Activated CD4-positive, alpha-beta T cell treated with anti-CD3 and anti-CD28 coated beads, Interleukin-2, amount 10 ng/mL, durations not matched to agents 24 days and 14 days (primary cell): ENCODE measurements at regions of chr10 and their contacts with region 1.

Region 1: DNA sequence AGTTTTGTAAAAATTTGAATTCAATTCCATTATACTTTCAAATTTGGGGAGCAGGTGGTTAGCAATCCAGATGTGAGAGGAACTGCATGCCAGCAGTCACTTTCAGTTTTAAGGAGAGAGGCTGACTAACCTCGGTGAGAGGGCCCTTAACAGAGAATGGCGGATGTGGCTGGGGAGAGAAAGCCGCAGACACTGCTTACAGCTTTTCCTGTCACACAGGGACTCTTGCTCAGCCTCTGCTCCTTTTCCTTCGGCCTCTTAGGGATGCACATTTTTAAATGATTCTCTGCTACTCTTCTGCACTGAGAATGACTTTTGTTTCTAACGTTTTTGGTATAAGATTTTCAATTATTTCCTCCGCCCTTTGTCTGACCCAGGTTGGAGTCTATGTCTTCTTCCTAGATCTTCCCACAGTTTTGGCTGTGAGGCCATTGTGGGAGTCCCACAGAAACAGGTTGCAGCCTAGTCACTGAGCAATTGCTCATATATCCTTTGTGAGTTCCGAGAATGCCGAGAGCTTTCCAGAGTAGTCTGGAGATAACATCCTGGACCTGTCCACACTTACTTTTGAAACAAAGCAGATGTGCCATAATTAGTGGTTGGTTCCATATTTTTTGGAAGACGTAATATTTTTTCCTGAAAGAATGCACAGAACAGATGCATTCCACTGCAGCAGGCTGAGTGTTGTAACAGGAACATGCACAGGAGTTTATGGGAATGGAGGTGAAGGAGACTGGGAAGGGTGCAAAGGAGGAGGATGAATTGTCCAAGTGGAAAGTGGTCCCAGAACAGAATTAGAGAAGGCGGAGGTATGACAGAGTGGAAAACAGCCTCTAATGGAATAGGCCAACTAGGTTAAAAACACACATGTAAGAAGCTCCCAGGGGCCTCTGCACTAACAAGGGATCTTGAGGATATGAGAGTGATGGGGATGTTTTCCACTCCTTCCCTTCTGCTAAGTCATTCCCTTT is 168.0 kb upstream of the ZNF32 start:
- DNase-seq: peak; percentile 94
- H3K4me3 Mint-ChIP-seq: peak overlapping the region; percentile 81
- H3K27ac Mint-ChIP-seq: peak overlapping the region; percentile 84
- H3K4me1 Mint-ChIP-seq: peaks cover 46% of the 10 kb centered on the region
- H3K27me3 Mint-ChIP-seq: peaks cover 5% of the 10 kb centered on the region

Region 2: DNA sequence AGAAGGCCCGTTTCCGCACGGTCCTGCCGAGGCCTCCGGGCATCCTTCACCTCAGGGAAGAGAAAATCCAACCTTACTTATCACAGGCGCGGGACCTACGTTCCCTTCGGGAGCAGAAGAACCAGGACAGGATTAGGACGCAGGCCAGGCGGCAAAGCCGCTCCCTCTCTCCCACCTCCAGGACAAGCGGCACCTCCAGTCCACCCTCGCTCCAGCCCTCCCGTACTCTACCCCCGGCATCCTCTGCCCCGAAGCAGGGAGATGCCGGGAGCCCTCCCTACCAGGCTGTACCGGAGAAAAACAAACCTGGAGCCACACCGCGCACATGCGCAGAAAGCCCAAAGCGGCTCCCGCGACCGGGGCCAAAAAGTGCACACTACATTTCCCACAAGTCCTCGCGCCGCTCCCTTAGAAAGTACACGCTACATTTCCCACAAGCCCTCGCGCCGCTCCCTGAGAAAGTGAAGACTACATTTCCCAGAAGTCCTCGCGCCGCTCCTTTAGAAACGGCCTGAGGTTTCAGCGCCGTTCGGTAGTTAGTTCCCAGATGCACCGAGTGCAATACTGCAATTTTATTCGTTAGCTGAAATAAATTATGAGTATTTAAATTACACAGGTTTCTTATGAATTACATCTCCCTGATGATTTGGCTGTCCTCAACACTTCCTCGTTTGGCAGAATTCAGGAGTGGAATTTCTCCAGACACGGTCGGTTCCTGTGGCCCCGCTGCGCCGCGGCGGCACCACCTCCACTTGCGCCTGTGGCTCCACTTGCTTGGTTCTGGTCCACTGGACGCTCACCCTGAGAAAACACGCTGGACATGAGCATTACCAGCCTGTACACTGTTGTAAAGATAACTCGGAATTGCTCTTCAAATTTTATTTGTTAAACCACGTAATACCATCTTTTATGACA is 1263.9 kb before region 1 on chr10:
- intact Hi-C with region 1: loop called (anchors 10 kb)
- DNase-seq: peak; percentile 98
- H3K4me3 Mint-ChIP-seq: peak overlapping the region; percentile 94
- H3K27ac Mint-ChIP-seq: peak overlapping the region; percentile 97
- H3K4me1 Mint-ChIP-seq: peaks cover 27% of the 10 kb centered on the region
- H3K27me3 Mint-ChIP-seq: no peaks in the 10 kb centered on the region

Region 3: GRCh38 chr10:43128958-43129706 is 687.5 kb before region 1 on chr10:
- intact Hi-C with region 1: loop called (anchors 10 kb)
- DNase-seq: peak; percentile 85
- H3K4me3 Mint-ChIP-seq: peak overlapping the region; percentile 66
- H3K27ac Mint-ChIP-seq: peak overlapping the region; percentile 91
- H3K4me1 Mint-ChIP-seq: peaks cover 60% of the 10 kb centered on the region
- H3K27me3 Mint-ChIP-seq: no peaks in the 10 kb centered on the region

Region 4: GRCh38 chr10:43594944-43595589 is 221.6 kb before region 1 on chr10:
- intact Hi-C with region 1: loop called (anchors 5 kb)
- DNase-seq: peak; percentile 84
- H3K4me3 Mint-ChIP-seq: peak overlapping the region; percentile 69
- H3K27ac Mint-ChIP-seq: peak overlapping the region; percentile 85
- H3K4me1 Mint-ChIP-seq: peaks cover 24% of the 10 kb centered on the region
- H3K27me3 Mint-ChIP-seq: peaks cover 10% of the 10 kb centered on the region

Region 5: DNA sequence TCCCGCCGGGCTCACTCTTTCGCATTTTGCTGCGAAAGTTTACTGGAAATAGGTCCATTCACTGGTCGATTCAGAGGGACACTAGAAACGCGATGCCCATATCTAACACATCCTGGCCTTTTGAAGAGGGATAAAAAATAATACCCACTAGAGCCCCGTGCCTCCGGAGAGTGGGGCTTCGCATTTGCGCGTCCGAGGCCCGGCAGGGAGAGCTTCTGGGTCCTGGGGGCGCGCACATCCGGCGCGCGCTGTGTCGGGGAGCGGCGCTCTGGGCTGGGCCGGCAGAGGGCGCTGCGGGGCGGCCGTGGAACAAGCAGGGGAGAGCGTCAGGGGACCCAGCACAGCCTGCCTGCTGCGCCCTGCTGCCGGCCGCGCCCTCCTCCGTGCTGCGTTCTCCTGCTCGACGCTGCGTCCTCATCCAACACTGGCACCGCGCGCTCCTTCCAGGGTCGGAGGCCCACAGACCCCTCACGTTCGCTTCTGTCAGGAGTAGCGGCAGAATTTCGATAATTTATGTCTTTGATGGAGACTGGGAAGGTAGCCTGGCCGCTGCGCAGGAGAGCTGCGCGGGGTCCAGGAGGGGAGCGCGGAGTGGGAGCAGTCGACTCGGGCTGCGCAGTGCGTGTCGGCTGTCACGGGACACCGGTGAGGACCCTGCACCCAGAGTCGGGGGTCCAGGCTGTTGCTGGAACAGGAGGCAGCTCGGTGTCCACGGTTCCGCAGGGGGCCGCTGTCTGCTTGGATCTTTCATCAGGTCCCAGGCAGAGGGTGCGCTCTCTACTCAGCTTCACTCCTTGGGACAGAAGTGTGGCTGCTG is 126.5 kb before region 1 on chr10:
- intact Hi-C with region 1: loop called (anchors 10 kb)
- DNase-seq: peak; percentile 96
- H3K4me3 Mint-ChIP-seq: peak overlapping the region; percentile 87
- H3K27ac Mint-ChIP-seq: peak overlapping the region; percentile 52
- H3K4me1 Mint-ChIP-seq: peaks cover 9% of the 10 kb centered on the region
- H3K27me3 Mint-ChIP-seq: peaks cover 33% of the 10 kb centered on the region

Region 6: DNA sequence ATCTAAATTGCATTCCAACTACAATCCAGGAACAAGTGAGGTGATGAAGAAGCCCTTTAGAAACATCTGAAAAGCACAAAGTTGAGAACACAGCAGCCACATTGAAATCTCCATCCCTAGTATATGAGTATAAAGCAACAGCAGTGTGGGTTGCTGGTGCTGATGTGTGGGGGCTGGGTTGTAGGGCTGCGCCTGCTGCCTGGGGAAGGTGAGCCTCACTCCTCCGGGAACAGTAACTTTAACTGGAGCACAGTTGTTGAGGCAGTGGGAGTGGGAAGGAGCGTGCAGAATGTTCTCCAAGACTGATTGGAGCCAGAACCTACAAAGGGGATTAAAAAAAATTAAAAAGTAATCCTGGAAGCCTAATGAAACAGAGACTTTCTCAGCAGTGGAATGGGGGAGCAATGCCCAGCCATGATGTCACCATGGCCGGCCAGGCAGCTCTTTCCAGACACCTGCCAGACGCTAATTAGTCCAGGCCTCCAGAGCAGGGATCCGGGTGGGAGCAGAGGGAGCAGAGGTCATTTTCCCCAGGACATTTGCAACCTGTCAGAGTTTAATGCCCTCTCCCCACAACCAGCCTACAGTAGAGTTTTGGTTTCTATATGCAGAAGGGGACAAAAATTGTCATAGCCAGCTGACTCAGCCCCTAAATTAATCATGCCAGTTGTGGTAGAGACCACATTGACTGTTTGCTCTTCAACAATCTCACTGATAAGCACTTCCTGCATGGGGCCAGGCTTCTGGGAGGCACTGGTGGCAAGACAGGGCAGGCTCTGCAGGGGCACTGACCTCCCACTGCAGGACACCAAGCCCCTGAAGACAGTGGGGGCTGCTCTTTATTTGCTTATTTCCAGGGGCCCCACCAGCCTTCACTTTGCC is 34.9 kb before region 1 on chr10:
- intact Hi-C with region 1: loop called (anchors 1 kb)
- DNase-seq: peak; percentile 59
- H3K4me3 Mint-ChIP-seq: peak overlapping the region; percentile 20
- H3K27ac Mint-ChIP-seq: peak overlapping the region; percentile 61
- H3K4me1 Mint-ChIP-seq: peaks cover 21% of the 10 kb centered on the region
- H3K27me3 Mint-ChIP-seq: no peaks in the 10 kb centered on the region